ENCODE measurements at regions of chr10 and their contacts with region 1.

Region 1: DNA sequence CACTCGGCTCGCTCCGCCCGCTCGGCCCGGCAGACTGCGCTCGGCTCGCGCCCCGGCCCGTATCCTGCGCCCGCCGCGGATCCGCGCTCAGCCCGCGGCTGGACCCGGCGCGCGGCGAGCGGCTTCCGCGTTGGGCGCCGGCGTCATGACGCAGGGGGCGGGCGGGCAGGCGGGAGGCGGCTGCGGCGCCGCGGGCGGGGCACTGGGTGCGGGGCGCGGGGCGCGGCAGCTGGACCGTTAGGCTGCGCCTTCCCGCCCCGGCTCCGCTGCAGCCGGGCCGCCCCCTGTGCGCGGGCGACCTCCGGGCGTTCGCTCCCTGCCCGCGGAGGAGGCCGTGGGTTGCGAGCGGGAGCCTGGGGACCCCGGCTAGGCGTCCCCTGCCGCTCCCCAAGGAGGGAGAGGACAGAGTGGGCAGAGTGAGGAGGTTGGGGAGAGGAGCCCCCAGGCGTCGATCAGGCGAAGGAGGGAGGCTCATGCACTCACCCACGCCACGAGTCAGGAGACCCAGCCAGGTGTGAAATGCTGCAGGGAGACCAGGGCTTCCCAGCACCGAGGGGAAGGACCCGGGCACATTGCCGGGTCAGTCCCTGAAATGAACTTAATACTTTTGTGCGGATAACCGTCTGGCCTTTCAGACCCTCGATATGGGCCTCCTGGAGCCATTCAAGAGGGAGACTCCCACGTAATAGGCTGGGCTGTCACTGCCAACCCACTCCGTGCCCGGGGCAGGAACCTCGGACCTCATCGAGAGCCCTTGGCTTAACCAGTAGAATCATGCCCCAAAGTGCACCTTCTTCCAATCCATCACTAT is at the start of gene PIP4K2A:
- DNase-seq: peak; percentile 61 to 96 (median 71)

Region 2: DNA sequence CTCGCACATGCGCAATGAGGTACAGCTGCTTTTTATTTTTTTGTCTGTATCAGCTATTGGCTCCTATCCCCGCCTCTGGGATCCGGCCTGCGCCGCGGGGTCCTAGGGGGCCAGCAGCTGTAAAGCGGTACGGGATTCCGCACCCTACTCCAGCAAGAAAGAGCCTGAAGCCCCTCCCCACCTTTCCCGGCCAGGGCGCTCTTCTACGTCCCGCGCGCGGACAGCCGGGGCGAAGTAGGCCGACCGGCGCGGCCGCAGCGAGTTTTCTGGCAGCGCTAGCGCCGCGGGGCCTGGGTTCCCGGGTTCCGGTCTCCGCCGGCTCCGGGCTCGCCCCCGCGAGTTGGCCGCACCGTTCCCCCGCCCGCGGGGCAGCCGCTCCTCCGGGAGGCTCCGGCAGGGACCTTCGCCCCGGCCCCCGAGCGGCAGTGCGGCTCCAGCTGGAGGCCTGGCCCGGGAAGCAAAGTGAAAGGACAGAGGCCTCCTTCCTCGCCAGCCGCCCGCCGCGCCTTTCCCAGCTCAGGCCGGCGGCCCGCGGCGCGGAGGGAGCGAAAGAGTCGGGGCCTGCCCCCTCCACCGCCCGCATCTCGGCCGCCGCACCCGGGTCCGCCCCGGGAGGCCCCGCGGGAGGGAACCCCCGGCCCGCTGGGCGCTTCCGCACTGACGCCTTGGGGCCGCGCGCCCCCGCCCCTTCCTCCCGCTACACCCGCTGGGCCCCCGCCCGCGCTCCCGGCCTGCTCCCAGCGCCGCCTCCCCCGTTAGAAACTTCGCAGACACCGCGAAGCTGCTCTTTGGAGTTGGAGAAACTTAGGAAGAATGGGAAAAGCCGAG is 374.1 kb before region 1 on chr10:
- intact Hi-C with region 1: loop called (anchors 10 kb)
- DNase-seq: peak in 9 of 10 donors; percentile 27 to 93 (median 57)

Region 3: GRCh38 chr10:22615819-22616499 is 98.7 kb before region 1 on chr10:
- intact Hi-C with region 1: loop called (anchors 5 kb)
- DNase-seq: peak; percentile 65 to 98 (median 87)

Measured in posterior cingulate gyrus (tissue), 11 donors.